GM10248 (cell line): ENCODE measurements at regions of chr16 and their contacts with region 1.

Region 1: GRCh38 chr16:2205104-2205966 is at the start of gene MLST8:
- DNase-seq: peak; percentile 99
- CTCF ChIP-seq: no peak

Region 2: DNA sequence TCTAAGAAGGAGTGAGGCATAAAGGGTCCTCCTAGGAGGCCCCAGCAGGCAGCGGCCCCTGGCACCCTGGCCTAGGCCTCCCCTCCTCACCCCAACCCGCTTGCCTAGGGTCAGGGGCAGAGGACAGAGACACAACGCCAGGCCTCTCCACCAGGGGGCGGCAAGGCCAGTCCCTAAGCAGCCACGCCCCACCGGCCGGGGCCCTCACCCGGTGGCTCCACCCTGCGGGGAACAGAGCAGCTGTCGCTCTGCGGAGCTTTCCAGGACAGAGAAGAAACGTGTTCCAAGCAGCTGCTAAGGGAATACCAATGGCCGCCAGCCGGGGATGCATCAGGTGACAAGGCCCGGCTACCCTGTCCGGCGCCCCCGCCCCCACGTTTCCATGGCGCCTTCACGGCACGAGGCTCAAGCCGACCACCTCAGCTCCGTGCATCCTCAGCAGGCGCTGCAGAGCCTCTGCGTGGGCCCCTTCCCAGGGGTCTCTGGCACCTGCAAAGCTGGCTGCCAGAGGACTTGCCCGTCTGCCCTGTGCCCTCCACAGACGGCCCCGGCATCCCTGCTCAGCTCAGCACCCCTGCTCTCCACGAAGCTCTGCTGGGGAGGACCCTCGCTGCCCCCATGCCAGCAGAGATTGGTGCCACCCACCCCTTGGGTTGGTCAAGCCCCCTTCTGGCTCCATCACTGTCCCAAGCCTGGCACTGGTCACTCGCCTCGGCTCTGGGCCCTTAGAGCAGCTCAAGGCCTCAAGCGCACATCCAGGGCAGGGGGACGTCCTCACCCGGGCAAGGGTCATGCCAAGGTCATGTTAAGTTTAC is 201.3 kb before region 1 on chr16:
- CTCF ChIA-PET with region 1: no interaction called
- POLR2A ChIA-PET with region 1: no interaction called
- DNase-seq: peak; percentile 93
- CTCF ChIP-seq: peak; percentile 90

Region 3: GRCh38 chr16:2194852-2195321 is 10.4 kb before region 1 on chr16:
- CTCF ChIA-PET with region 1: interaction called, 16 read pairs
- POLR2A ChIA-PET with region 1: no interaction called
- DNase-seq: peak; percentile 75
- CTCF ChIP-seq: peak; percentile 55

Region 4: GRCh38 chr16:2308089-2308962 is 103.0 kb after region 1 on chr16:
- CTCF ChIA-PET with region 1: no interaction called
- POLR2A ChIA-PET with region 1: no interaction called
- DNase-seq: no peak
- CTCF ChIP-seq: no peak

Region 5: GRCh38 chr16:2333772-2334379 is 128.5 kb after region 1 on chr16:
- CTCF ChIA-PET with region 1: no interaction called
- POLR2A ChIA-PET with region 1: no interaction called
- DNase-seq: no peak
- CTCF ChIP-seq: no peak